ENCODE measurements at regions of chr11 and their contacts with region 1.

Region 1: GRCh38 chr11:2549876-2550620 is 105.2 kb downstream of the KCNQ1 start:
- DNase-seq: no peak
- H3K4me3 ChIP-seq: no peak overlapping the region
- H3K4me1 ChIP-seq: no peaks in the 10 kb centered on the region
- H3K27me3 ChIP-seq: no peaks in the 10 kb centered on the region

Region 2: GRCh38 chr11:2612884-2613571 is 63.0 kb after region 1 on chr11:
- in situ Hi-C with region 1: loop called (anchors 10 kb)
- DNase-seq: no peak
- H3K4me3 ChIP-seq: no peak overlapping the region
- H3K4me1 ChIP-seq: no peaks in the 10 kb centered on the region
- H3K27me3 ChIP-seq: peaks cover 5% of the 10 kb centered on the region; the same call in 1 of the 2 replicates

Region 3: GRCh38 chr11:3001496-3001895 is 451.4 kb after region 1 on chr11:
- in situ Hi-C with region 1: no loop called
- DNase-seq: no peak
- H3K4me3 ChIP-seq: no peak overlapping the region
- H3K4me1 ChIP-seq: no peaks in the 10 kb centered on the region
- H3K27me3 ChIP-seq: no peaks in the 10 kb centered on the region

Measured in HAP-1 (cell line).